Endothelial cell of umbilical vein (primary cell): ENCODE measurements at regions of chr13 and their contacts with region 1.

Region 1: GRCh38 chr13:20703780-20704445 is 414 bp downstream of the IL17D start:
- DNase-seq: peak; percentile 66
- H3K4me3 ChIP-seq: peak overlapping the region in 2 of 3 experiments; percentile 49 to 52
- H3K27ac ChIP-seq: no peak overlapping the region
- H3K4me1 ChIP-seq: peaks cover 8% of the 10 kb centered on the region
- H3K27me3 ChIP-seq: no peaks in the 10 kb centered on the region
- CTCF ChIP-seq: peak; percentile 64 to 69
- POLR2A ChIP-seq: peak; percentile 26

Region 2: GRCh38 chr13:20525690-20526544 is 178.0 kb before region 1 on chr13 and contains the start of gene CRYL1:
- CTCF ChIA-PET with region 1: interaction called, 3 read pairs
- POLR2A ChIA-PET with region 1: interaction called, 3 read pairs
- dilution Hi-C with region 1: no loop called
- intact Hi-C with region 1: loop called (anchors 10 kb)
- DNase-seq: peak; percentile 73
- H3K4me3 ChIP-seq: peak within 1 kb of the TSS; percentile 12 to 87 (median 60)
- H3K27ac ChIP-seq: peak within 1 kb of the TSS; percentile 67
- H3K4me1 ChIP-seq: peaks cover 13% of the 10 kb centered on the region
- H3K27me3 ChIP-seq: no peaks in the 10 kb centered on the region
- CTCF ChIP-seq: no peak
- POLR2A ChIP-seq: peak; percentile 51
- total RNA-seq, gene CRYL1: 13.9 and 18.8 TPM in 2 replicates

Region 3: GRCh38 chr13:20691616-20692015 is 12.3 kb before region 1 on chr13:
- CTCF ChIA-PET with region 1: no interaction called
- POLR2A ChIA-PET with region 1: no interaction called
- dilution Hi-C with region 1: no loop called
- intact Hi-C with region 1: no loop called
- DNase-seq: no peak
- H3K4me3 ChIP-seq: no peak overlapping the region
- H3K27ac ChIP-seq: no peak overlapping the region
- H3K4me1 ChIP-seq: no peaks in the 10 kb centered on the region
- H3K27me3 ChIP-seq: no peaks in the 10 kb centered on the region
- CTCF ChIP-seq: no peak
- POLR2A ChIP-seq: no peak

Region 4: GRCh38 chr13:20729633-20730585 is 26.0 kb after region 1 on chr13:
- CTCF ChIA-PET with region 1: no interaction called
- POLR2A ChIA-PET with region 1: no interaction called
- dilution Hi-C with region 1: no loop called
- intact Hi-C with region 1: no loop called
- DNase-seq: no peak
- H3K4me3 ChIP-seq: no peak overlapping the region
- H3K27ac ChIP-seq: no peak overlapping the region
- H3K4me1 ChIP-seq: peaks cover 7% of the 10 kb centered on the region
- H3K27me3 ChIP-seq: no peaks in the 10 kb centered on the region
- CTCF ChIP-seq: no peak
- POLR2A ChIP-seq: no peak